ENCODE measurements at regions of chr1 and their contacts with region 1.

Region 1: DNA sequence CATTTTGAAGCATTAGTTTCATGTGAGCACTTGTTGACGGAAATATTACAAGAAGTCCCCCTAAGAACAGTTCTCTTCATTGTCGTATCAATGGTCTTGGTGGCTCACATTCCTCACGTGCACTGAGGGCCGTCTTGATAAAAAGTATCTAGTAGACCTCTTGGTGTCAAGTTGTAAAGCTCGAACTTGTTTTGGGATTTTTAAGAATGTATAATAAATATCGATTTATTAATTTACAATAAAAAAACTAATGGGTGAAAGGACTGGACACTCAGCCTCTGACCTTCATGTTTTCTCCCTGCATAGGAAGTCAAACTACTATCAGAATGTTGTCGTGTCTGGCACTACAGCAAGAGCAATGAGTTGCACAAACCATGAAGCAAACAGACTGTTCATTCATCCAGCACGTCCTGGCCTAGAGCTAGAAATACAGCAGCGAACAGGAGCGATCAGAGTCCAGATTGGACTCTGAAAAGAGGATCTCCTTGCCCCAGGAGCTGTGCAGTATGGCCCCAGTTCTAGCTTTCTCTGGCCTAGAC is 319.2 kb downstream of the SMYD3 start:
- DNase-seq: no peak
- H3K4me3 ChIP-seq: no peak overlapping the region
- H3K27ac ChIP-seq: no peak overlapping the region
- H3K4me1 ChIP-seq: no peaks in the 10 kb centered on the region
- H3K27me3 ChIP-seq: no peaks in the 10 kb centered on the region
- CTCF ChIP-seq: no peak

Region 2: GRCh38 chr1:246169019-246169418 is 18.9 kb before region 1 on chr1:
- CTCF ChIA-PET with region 1: interaction called, 20 read pairs
- POLR2A ChIA-PET with region 1: no interaction called
- intact Hi-C with region 1: no loop called
- DNase-seq: no peak
- H3K4me3 ChIP-seq: no peak overlapping the region
- H3K27ac ChIP-seq: no peak overlapping the region
- H3K4me1 ChIP-seq: no peaks in the 10 kb centered on the region
- H3K27me3 ChIP-seq: no peaks in the 10 kb centered on the region
- CTCF ChIP-seq: no peak

Measured in PC-9 (cell line).